Activated naive CD4-positive, alpha-beta T cell treated with anti-CD3 and anti-CD28 coated beads for 36 hours (primary cell): ENCODE measurements at regions of chr15 and their contacts with region 1.

Region 1: DNA sequence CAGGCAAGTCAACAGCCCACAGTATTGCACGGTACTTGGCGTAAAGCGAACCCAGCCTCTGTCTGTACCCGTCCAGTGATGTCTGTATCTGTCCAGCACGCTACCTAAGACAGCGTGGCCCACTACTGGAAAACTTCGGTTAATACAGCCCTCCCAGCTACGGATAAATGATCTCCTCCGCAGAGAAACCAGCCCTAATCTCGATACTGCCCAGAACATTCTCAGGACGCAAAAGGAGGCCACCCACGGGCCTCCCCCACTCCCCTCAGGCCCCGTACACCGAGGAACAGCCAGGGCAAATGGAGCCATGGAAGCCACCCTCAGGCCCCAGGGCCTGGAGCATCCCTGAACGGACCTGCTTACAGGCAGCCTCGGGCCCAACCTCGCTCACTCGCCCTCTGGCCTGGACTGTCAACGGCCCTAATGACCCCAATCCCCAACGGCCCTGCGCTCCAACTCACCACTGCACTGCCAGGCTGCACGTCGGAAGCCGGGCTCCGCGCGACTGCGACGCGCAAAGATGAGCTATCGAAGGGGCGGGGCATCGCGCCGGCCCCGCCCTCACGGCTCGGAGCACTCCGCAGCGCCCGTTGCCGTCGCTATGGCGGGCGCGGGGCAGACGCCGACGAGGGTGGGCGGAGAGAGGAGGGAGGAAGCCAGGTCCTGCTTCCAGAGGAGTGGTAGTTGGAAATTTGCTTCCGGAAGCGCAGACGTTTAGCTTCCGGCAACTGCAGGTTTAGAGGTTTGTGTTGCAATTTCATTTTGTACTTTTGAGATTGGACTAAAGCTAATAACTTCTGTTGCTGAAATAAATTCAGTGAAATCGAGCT is at the start of gene SKIC8:
- DNase-seq: peak; percentile 92
- H3K4me3 Mint-ChIP-seq: peak within 1 kb of the TSS; percentile 97
- H3K27ac Mint-ChIP-seq: peak within 1 kb of the TSS; percentile 77
- H3K4me1 Mint-ChIP-seq: peaks cover 31% of the 10 kb centered on the region
- H3K27me3 Mint-ChIP-seq: no peaks in the 10 kb centered on the region
- total RNA-seq, gene SKIC8: 44.2 to 46.9 TPM

Region 2: DNA sequence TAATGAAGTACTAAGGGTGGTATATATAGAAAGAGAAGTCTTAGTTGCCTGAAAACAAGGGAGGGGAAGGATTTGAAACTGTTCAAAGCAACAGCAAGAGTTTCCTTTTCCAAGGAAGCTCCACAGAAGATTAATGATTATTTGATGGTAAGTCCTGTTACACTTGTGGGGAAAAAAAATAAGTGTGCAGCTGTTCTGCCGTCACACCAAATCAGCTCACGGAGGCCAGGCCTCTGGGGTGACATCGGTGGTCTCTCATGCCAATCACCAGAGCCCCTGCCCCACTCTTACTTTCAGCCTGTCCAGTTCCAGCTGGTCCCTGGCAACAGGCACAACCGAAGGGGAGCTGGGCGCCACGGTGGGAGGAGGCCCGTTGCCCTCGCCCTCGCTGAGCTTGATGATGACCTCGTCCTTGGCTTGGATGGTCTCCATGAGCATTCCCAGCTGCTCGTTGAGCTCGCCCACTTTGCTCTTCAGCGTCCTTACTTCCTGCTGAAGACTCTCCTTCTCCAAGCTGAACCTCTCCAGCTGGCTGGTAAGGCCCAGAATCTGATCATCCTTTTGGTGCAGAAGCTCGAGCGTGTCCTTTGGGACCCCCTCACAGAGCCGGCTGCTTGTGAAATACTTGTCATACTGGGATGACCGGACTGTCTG is 275.3 kb before region 1 on chr15:
- CTCF ChIA-PET with region 1: no interaction called
- intact Hi-C with region 1: no loop called
- DNase-seq: no peak
- H3K4me3 Mint-ChIP-seq: no peak overlapping the region
- H3K27ac Mint-ChIP-seq: peak overlapping the region; percentile 18
- H3K4me1 Mint-ChIP-seq: peaks cover 7% of the 10 kb centered on the region
- H3K27me3 Mint-ChIP-seq: no peaks in the 10 kb centered on the region

Region 3: DNA sequence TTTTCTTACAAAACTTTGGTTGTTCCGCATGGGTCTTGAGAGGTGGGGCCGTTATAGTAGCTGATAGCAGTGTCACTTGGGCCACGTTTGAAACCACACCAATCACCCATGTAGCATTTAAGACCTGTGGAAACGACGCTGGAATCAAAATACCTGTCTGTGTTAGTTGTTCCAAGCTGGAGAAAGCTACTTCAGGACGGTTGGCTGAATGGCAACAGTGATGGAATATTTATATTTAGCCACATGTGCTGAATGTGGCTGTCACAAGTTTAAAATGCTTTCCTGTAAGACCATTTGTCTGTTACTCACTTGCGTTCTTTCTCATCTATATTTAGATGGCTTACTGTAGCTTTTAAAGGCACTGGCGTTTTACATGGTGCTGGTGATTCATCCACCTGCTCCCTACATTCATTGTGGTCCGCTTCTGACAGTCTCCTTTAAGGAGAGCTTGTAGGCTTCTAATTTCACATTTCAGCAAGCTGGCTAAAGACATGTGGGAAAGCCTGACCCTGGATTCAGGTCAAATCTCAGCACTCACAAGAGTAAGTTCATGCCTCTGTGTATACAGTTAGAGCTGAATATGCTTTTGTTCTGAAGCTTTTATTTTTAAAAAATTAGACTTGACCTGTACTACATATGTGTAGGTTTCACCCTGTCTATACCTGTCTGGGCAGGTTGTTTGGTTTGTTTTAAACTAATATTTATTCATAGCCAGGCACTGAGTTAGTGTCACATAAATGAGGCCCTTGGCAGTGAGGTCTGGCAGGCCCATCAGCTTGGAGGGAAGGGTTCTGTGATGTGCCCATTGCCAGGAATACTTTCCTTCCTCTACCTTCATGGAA is 33.3 kb before region 1 on chr15:
- CTCF ChIA-PET with region 1: interaction called, 8 read pairs
- intact Hi-C with region 1: loop called (anchors 1 kb)
- DNase-seq: peak; percentile 31
- H3K4me3 Mint-ChIP-seq: peak overlapping the region; percentile 84
- H3K27ac Mint-ChIP-seq: peak overlapping the region; percentile 83
- H3K4me1 Mint-ChIP-seq: peaks cover 39% of the 10 kb centered on the region
- H3K27me3 Mint-ChIP-seq: no peaks in the 10 kb centered on the region

Region 4: GRCh38 chr15:78280319-78281072 is 18.8 kb before region 1 on chr15:
- CTCF ChIA-PET with region 1: interaction called, 10 read pairs
- intact Hi-C with region 1: no loop called
- DNase-seq: no peak
- H3K4me3 Mint-ChIP-seq: no peak overlapping the region
- H3K27ac Mint-ChIP-seq: no peak overlapping the region
- H3K4me1 Mint-ChIP-seq: no peaks in the 10 kb centered on the region
- H3K27me3 Mint-ChIP-seq: no peaks in the 10 kb centered on the region

Region 5: DNA sequence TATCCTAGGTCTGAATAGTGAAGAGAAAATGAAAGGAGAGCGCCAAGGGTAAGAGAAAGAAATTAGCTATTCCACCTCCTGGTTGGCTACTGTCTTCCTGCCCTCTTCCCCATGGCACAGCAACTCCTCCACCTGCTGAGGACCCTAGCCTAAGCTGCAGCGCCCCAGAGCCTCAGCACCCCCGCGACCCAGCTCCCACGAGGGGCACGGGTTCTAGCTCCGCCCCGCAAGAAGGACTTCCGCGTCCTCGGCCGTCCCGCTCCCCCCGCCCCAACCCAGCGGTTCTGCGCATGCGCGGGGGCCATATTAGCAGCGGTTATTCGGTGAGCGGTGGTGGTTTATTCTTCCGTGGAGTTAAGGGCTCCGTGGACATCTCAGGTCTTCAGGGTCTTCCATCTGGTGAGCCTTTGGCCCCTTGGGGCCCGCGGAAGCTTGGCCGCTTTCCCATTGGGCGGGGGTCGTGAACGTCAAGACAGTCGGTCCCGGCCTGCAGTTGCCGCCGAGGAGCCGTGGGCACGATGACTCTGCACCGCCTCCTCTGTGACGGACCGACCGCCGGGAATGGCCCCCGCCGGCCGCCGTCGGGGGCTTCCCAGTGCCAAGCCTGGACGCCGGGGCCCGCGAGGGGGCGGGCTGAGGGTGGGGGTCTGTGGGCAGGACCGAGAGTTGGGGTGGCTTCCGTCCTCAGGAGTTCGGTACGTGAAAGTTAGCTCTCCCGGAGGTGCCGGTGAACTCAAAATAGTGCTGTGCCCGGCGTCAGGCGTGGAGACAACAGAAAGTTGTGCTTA is 241.0 kb after region 1 on chr15 and contains the start of gene PSMA4:
- CTCF ChIA-PET with region 1: no interaction called
- intact Hi-C with region 1: loop called (anchors 2 kb)
- DNase-seq: peak; percentile 94
- H3K4me3 Mint-ChIP-seq: peak within 1 kb of the TSS; percentile 84
- H3K27ac Mint-ChIP-seq: peak within 1 kb of the TSS; percentile 90
- H3K4me1 Mint-ChIP-seq: peaks cover 23% of the 10 kb centered on the region
- H3K27me3 Mint-ChIP-seq: no peaks in the 10 kb centered on the region
- total RNA-seq, gene PSMA4: 306 to 310 TPM

Region 6: DNA sequence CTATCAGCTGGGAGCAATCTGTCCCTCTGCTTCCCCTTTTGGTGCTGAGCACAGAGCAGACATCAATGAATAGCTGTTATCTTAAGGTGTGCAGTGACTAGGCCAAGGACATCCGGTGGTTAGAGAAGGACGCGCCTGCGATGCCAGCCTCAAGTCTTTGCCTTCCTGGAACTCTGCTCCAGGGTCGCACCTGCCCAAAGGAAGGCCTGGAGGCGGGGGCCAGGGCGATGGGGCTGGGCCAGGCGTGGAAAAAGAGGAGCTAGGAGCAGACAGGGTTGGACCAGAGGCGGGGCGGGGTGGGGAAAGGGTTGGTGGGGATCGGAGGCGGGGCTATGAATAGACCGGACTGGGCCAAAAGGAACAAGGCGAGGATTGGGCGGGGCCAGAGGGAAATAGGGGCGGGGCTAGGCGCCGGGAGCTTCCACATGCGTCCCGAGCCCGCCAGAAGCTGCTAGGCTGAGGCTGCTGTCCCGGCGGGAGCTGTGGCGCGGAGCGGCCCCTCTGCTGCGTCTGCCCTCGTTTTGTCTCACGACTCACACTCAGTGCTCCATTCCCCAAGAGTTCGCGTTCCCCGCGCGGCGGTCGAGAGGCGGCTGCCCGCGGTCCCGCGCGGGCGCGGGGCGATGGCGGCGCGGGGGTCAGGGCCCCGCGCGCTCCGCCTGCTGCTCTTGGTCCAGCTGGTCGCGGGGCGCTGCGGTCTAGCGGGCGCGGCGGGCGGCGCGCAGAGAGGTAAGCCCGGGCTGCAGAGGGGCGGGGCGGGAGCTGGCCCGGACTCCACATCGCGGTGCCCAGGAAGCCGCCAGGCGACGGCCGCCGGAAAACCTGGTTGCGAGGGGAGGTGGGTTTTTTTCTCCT is 266.0 kb after region 1 on chr15 and contains the start of gene CHRNA5:
- CTCF ChIA-PET with region 1: no interaction called
- intact Hi-C with region 1: loop called (anchors 1 kb)
- DNase-seq: peak; percentile 46
- H3K4me3 Mint-ChIP-seq: peak within 1 kb of the TSS; percentile 80
- H3K27ac Mint-ChIP-seq: no peak within 1 kb of the TSS
- H3K4me1 Mint-ChIP-seq: peaks cover 24% of the 10 kb centered on the region
- H3K27me3 Mint-ChIP-seq: peaks cover 36% of the 10 kb centered on the region
- total RNA-seq, gene CHRNA5: 1.1 to 1.5 TPM

Region 7: GRCh38 chr15:78761891-78762385 is 462.6 kb after region 1 on chr15:
- CTCF ChIA-PET with region 1: no interaction called
- intact Hi-C with region 1: loop called (anchors 5 kb)
- DNase-seq: no peak
- H3K4me3 Mint-ChIP-seq: peak overlapping the region; percentile 54
- H3K27ac Mint-ChIP-seq: peak overlapping the region; percentile 89
- H3K4me1 Mint-ChIP-seq: peaks cover 24% of the 10 kb centered on the region
- H3K27me3 Mint-ChIP-seq: no peaks in the 10 kb centered on the region